CD4-positive, alpha-beta memory T cell (primary cell): ENCODE measurements at regions of chr1 and their contacts with region 1.

Region 1: GRCh38 chr1:149962123-149962548 is 25.5 kb upstream of the MTMR11 start:
- DNase-seq: peak in 4 of 5 donors; percentile 57 to 63 (median 59)
- H3K4me3 ChIP-seq: no peak overlapping the region
- H3K4me3 Mint-ChIP-seq: peak overlapping the region in 1 of 8 donors; percentile 20
- H3K27ac ChIP-seq: no peak overlapping the region
- H3K27ac Mint-ChIP-seq: peak overlapping the region in 3 of 7 donors; percentile 22 to 65 (median 64)
- H3K4me1 ChIP-seq: peaks cover 16% of the 10 kb centered on the region
- H3K4me1 Mint-ChIP-seq: peaks cover 10 to 23% (median 16%) of the 10 kb centered on the region in 4 donors
- H3K27me3 ChIP-seq: no peaks in the 10 kb centered on the region
- H3K27me3 Mint-ChIP-seq: no peaks in the 10 kb centered on the region

Region 2: GRCh38 chr1:149927503-149928387 is 34.4 kb before region 1 on chr1 and contains the start of gene SF3B4:
- CTCF ChIA-PET with region 1: interaction called, 13 read pairs
- POLR2A ChIA-PET with region 1: interaction called, 3 read pairs
- intact Hi-C with region 1: no loop called
- DNase-seq: peak; percentile 93 to 97 (median 94)
- H3K4me3 ChIP-seq: peak within 1 kb of the TSS; percentile 80 to 86
- H3K4me3 Mint-ChIP-seq: peak within 1 kb of the TSS; percentile 90 to 98 (median 96)
- H3K27ac ChIP-seq: peak within 1 kb of the TSS; percentile 87
- H3K27ac Mint-ChIP-seq: peak within 1 kb of the TSS; percentile 95 to 98 (median 97)
- H3K4me1 ChIP-seq: peaks cover 40% of the 10 kb centered on the region
- H3K4me1 Mint-ChIP-seq: peaks cover 28 to 53% (median 41%) of the 10 kb centered on the region in 4 donors
- H3K27me3 ChIP-seq: no peaks in the 10 kb centered on the region
- H3K27me3 Mint-ChIP-seq: peaks cover 3% of the 10 kb centered on the region in 2 donors
- total RNA-seq, gene SF3B4: 47.7 to 48.8 TPM

Region 3: DNA sequence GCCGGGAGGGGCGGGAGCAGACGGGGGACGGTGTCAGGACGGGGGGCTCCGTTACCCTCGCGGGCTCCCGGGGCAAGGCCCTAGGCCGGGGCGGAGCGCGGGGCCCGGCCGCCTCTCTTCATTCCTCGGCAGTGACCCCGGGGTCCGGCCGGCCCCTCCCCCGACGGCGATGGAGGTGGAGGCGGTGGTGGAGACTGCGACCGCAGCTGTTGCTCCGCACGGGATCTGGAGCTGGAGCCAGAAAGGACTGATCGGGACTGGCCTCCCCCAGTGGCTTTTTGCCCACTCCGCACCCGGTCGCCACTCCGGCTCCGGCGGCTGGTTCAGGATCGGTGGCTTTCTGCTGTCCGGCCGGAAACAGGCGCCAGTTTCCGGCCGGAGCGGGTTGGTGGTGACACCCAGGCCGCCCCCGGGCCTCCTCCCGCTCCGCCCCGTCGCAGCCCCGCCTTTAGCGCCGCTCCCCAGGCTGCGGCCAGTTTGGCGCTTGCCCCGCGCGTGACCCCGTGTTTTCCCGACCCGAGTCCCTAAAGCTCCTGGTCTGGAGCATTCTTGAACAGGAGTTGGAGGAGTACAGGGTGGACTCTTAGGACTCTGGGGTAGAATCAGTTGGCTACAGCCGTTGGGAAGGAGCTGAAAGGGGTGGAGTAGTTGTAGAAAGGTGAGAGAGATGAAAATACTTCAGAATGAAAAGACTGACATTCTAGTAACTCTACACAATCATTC is 48.4 kb after region 1 on chr1 and contains the start of gene OTUD7B:
- CTCF ChIA-PET with region 1: interaction called, 6 read pairs
- POLR2A ChIA-PET with region 1: interaction called, 3 read pairs
- intact Hi-C with region 1: loop called (anchors 5 kb)
- DNase-seq: peak; percentile 46 to 64 (median 49)
- H3K4me3 ChIP-seq: peak within 1 kb of the TSS; percentile 64 to 87
- H3K4me3 Mint-ChIP-seq: peak within 1 kb of the TSS; percentile 89 to 99 (median 96)
- H3K27ac ChIP-seq: peak within 1 kb of the TSS; percentile 63
- H3K27ac Mint-ChIP-seq: peak within 1 kb of the TSS; percentile 62 to 94 (median 91)
- H3K4me1 ChIP-seq: peaks cover 20% of the 10 kb centered on the region
- H3K4me1 Mint-ChIP-seq: peaks cover 22 to 36% (median 26%) of the 10 kb centered on the region in 4 donors
- H3K27me3 ChIP-seq: no peaks in the 10 kb centered on the region
- H3K27me3 Mint-ChIP-seq: no peaks in the 10 kb centered on the region
- total RNA-seq, gene OTUD7B: 15.3 to 17.6 TPM

Region 4: DNA sequence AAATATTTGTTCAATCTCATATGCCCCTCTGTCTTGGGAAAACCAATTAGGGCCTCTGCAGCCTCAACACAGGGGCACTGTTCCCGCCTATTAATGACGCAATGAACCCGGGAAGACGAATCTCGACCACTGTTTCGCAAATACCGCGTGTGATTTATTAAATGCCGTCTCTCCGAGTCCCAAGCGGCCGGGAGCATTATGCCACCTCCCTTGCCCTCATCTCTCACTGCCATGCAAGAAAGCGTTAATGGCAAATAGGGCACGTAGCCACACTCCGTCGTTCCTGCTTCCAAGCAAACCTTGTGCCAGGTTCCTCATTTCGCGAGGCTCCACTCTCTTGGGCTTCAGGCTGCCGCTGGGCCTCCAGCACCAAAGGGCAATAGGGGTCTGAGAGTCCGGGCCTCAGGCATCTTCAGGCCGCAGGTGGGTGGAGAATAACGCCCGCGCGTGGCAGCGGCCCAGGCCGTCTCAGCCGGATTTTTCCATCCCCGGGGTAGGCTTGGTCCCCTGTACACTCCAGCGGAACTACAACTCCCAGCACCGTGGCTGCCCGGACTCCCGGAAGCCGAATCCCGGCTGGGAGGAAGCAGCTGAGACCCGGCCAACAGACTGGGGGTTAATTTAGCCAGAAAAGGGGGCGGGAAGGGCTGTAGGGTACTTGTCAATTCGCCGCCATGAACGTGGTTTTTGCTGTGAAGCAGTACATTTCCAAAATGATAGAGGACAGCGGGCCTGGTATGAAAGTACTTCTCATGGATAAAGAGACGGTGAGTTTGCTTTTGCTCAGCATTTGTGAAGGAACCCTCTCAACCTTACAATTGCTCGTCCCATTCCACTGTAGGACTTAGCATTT is 105.3 kb after region 1 on chr1 and contains the start of gene VPS45:
- CTCF ChIA-PET with region 1: interaction called, 6 read pairs
- POLR2A ChIA-PET with region 1: no interaction called
- intact Hi-C with region 1: loop called (anchors 1 kb)
- DNase-seq: peak; percentile 69 to 82 (median 75)
- H3K4me3 ChIP-seq: peak within 1 kb of the TSS; percentile 70 to 88
- H3K4me3 Mint-ChIP-seq: peak within 1 kb of the TSS; percentile 91 to 98 (median 96)
- H3K27ac ChIP-seq: peak within 1 kb of the TSS; percentile 65
- H3K27ac Mint-ChIP-seq: peak within 1 kb of the TSS; percentile 91 to 97 (median 94)
- H3K4me1 ChIP-seq: peaks cover 30% of the 10 kb centered on the region
- H3K4me1 Mint-ChIP-seq: peaks cover 27 to 42% (median 35%) of the 10 kb centered on the region in 4 donors
- H3K27me3 ChIP-seq: no peaks in the 10 kb centered on the region
- H3K27me3 Mint-ChIP-seq: no peaks in the 10 kb centered on the region
- total RNA-seq, gene VPS45: 32.1 to 38.5 TPM

Region 5: DNA sequence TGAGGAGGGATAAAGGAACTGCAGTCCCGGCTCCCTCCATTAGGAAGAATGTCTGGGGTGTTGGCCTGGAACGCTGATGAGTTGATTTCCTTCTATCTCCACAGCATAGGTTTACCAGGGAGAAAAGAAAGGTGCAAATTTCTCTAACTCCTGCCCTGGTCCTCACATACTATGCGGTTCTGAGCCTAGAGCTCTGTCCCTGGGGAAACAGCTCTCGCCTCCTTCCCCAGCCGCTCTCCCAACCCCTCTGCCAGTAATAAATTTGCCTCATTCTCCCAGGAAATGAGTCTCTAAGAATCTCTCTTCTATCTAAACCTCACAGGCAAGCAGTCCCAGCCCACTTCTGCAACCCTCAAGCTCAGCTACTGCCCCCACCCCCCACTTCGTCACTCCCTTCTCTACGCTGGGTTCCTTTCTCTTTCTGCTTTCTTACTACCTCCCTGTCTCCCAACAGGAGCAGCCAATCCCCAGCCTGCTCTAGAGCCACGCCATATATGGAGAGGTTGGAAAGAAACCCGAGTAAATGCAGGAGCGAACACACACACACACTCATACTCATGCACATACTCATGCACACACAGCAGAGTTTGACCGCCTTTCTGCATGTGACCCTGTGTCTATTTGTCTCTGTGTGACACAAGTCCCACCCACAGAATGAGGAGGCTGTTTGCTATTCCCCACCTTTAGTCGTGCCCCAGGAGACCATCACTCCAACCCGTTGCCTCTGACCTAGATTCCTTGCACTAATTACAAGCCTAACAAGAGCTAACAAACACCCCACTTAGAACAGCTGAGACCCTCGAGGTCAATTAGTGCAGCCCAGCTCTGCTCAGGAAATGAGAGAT is 200.9 kb after region 1 on chr1:
- CTCF ChIA-PET with region 1: interaction called, 11 read pairs
- POLR2A ChIA-PET with region 1: no interaction called
- intact Hi-C with region 1: loop called (anchors 1 kb)
- DNase-seq: no peak
- H3K4me3 ChIP-seq: no peak overlapping the region
- H3K4me3 Mint-ChIP-seq: peak overlapping the region in 5 of 8 donors; percentile 0 to 61 (median 34)
- H3K27ac ChIP-seq: no peak overlapping the region
- H3K27ac Mint-ChIP-seq: peak overlapping the region in 5 of 7 donors; percentile 34 to 83 (median 53)
- H3K4me1 ChIP-seq: peaks cover 40% of the 10 kb centered on the region
- H3K4me1 Mint-ChIP-seq: peaks cover 34 to 52% (median 42%) of the 10 kb centered on the region in 4 donors
- H3K27me3 ChIP-seq: no peaks in the 10 kb centered on the region
- H3K27me3 Mint-ChIP-seq: no peaks in the 10 kb centered on the region